Breast epithelium (tissue), 4 donors: ENCODE measurements at regions of chrX and their contacts with region 1.

Region 1: GRCh38 chrX:14673764-14674163 is 144.4 kb downstream of the GLRA2 start:
- DNase-seq: no peak
- H3K4me3 ChIP-seq: no peak overlapping the region
- H3K27ac ChIP-seq: no peak overlapping the region
- H3K4me1 ChIP-seq: no peaks in the 10 kb centered on the region
- H3K27me3 ChIP-seq: peaks cover 0 to 19% of the 10 kb centered on the region in 2 donors
- CTCF ChIP-seq: no peak
- POLR2A ChIP-seq: no peak

Region 2: DNA sequence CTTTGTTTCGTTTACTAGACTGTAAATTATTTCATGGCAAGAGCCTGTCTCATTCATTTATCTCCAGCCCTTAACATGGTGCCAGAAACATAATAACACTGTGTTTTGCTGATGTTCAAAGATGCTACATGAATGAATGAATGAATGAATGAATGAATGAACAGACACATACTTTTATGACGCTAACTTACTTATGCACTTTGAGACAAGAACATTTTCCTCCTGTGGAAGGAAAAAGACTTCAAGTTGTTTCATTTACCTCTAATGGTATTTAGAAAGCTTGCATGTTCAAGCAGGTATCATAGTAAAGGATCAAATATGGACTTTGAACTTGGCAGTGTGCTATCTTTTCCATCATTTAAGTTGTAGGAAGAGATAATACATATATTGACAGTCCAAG is 12.8 kb before region 1 on chrX:
- intact Hi-C with region 1: loop called (anchors 2 kb)
- DNase-seq: no peak
- H3K4me3 ChIP-seq: no peak overlapping the region
- H3K27ac ChIP-seq: no peak overlapping the region
- H3K4me1 ChIP-seq: no peaks in the 10 kb centered on the region
- H3K27me3 ChIP-seq: no peaks in the 10 kb centered on the region
- CTCF ChIP-seq: no peak
- POLR2A ChIP-seq: no peak

Region 3: GRCh38 chrX:14899607-14900006 is 225.8 kb after region 1 on chrX:
- intact Hi-C with region 1: no loop called
- DNase-seq: no peak
- H3K4me3 ChIP-seq: no peak overlapping the region
- H3K27ac ChIP-seq: no peak overlapping the region
- H3K4me1 ChIP-seq: no peaks in the 10 kb centered on the region
- H3K27me3 ChIP-seq: peaks cover 0 to 5% of the 10 kb centered on the region in 2 donors
- CTCF ChIP-seq: no peak
- POLR2A ChIP-seq: no peak